KBM-7 (cell line): ENCODE measurements at regions of chr9 and their contacts with region 1.

Region 1: GRCh38 chr9:88578121-88579054 is 43.4 kb downstream of the NXNL2 start:
- DNase-seq: peak; percentile 74

Region 2: DNA sequence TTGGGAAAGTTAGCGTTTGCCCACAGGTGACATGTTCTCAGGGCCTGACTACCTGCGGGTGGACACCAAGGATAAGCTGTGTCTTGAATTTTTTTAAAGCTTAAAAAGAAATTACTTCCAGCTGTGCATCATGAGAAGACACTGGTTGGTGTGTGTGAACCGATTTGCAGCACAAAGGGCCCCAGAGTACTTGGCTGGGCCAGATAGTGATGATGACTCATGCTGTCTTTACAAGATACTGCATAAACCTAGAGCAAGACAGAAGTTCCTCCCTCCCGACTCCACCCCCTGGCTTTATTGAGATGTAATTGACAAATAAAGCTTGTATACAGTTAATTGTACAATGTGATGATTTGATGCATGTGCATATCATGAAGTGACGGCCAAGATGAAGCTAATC is 169.4 kb after region 1 on chr9:
- in situ Hi-C with region 1: no loop called
- DNase-seq: no peak

Region 3: GRCh38 chr9:88905506-88905905 is 327.1 kb after region 1 on chr9:
- in situ Hi-C with region 1: no loop called
- DNase-seq: no peak

Region 4: GRCh38 chr9:88991066-88992034 is 413.0 kb after region 1 on chr9 and contains the start of gene S1PR3:
- in situ Hi-C with region 1: loop called (anchors 25 kb)
- DNase-seq: no peak